K562 (cell line): ENCODE measurements at regions of chr1 and their contacts with region 1.

Region 1: DNA sequence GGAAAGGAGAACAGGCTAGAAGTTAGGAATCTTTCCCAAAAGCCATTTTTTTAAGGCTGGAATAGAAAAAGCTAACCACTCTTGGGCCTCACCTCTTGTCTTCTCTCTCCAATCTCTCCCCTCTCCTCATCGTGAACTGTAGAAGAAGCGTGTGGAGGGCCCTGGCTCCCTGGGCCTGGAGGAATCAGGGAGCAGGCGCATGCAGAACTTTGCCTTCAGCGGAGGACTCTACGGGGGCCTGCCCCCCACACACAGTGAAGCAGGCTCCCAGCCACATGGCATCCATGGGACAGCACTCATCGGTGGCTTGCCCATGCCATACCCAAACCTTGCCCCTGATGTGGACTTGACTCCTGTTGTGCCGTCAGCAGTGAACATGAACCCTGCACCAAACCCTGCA is 19.4 kb downstream of the PPP1R8 start:
- DNase-seq: no peak
- ATAC-seq: peak; percentile 33; the same call in 1 of the 3 replicates
- H3K4me3 ChIP-seq: no peak overlapping the region
- H3K27ac ChIP-seq: no peak overlapping the region
- H3K4me1 ChIP-seq: no peaks in the 10 kb centered on the region
- H3K27me3 ChIP-seq: no peaks in the 10 kb centered on the region
- CTCF ChIP-seq: no peak
- EP300 ChIP-seq: no peak
- POLR2A ChIP-seq: no peak
- RAD21 ChIP-seq: no peak

Region 2: GRCh38 chr1:27830621-27831424 is 19.1 kb before region 1 on chr1 and contains the start of gene PPP1R8:
- CTCF ChIA-PET with region 1: no interaction called
- POLR2A ChIA-PET with region 1: interaction called, 12 read pairs
- in situ Hi-C with region 1: no loop called
- intact Hi-C with region 1: no loop called
- DNase-seq: peak; percentile 90 to 99 (median 93)
- ATAC-seq: peak; percentile 99
- H3K4me3 ChIP-seq: peak within 1 kb of the TSS; percentile 61
- H3K27ac ChIP-seq: peak within 1 kb of the TSS; percentile 82
- H3K4me1 ChIP-seq: peaks cover 7 to 14% of the 10 kb centered on the region in 2 experiments; a peak in 3 of 5 replicates
- H3K27me3 ChIP-seq: no peaks in the 10 kb centered on the region
- CTCF ChIP-seq: no peak
- EP300 ChIP-seq: no peak
- POLR2A ChIP-seq: peak; percentile 99
- RAD21 ChIP-seq: no peak
- polyA plus RNA-seq, gene PPP1R8: 16.2 to 20.2 TPM

Region 3: DNA sequence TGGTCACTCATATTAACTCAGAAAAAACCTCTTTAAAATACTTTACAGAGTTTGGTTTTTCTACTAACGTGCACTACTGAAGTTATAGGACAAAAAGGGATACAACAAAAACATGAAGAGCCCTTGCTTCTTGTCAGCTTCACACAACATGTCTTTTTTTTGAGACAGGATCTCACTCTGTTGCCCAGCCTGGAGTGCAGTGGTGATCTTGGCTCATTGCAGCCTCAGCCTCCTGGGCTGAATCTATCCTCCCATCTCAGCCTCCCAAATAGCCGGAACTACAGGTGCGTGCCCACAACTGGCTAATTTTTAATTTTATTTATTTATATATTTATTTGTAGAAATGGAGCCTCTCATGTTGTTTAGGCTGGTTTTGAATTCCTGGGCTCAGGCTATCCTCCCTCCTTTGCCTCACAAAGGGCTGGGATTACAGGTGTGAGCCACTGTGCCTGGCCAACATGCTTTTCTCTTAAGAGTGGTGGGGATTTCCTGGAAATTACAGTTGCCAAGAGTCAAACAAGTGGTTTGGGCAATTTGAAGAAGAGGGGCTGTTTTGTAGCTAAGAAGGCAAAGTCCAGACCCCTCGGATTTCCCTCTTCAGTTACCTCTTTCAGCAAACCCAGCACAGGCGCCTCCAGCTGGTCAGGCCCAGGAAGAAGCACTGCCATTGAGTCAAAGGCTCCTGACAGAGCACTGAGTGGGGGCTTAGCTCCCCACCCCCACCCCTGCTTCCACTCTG is 78.4 kb after region 1 on chr1:
- CTCF ChIA-PET with region 1: no interaction called
- POLR2A ChIA-PET with region 1: no interaction called
- in situ Hi-C with region 1: no loop called
- intact Hi-C with region 1: no loop called
- DNase-seq: peak in 2 of 4 experiments; percentile 35 to 36
- ATAC-seq: peak; percentile 69
- H3K4me3 ChIP-seq: no peak overlapping the region
- H3K27ac ChIP-seq: no peak overlapping the region
- H3K4me1 ChIP-seq: peaks cover 0 to 6% of the 10 kb centered on the region in 2 experiments; a peak in 3 of 5 replicates
- H3K27me3 ChIP-seq: no peaks in the 10 kb centered on the region
- CTCF ChIP-seq: peak; percentile 34 to 40 (median 35); a peak in 4 of 6 replicates
- EP300 ChIP-seq: no peak
- POLR2A ChIP-seq: no peak
- RAD21 ChIP-seq: peak in 1 of 2 experiments; percentile 24; a peak in 1 of 4 replicates

Region 4: DNA sequence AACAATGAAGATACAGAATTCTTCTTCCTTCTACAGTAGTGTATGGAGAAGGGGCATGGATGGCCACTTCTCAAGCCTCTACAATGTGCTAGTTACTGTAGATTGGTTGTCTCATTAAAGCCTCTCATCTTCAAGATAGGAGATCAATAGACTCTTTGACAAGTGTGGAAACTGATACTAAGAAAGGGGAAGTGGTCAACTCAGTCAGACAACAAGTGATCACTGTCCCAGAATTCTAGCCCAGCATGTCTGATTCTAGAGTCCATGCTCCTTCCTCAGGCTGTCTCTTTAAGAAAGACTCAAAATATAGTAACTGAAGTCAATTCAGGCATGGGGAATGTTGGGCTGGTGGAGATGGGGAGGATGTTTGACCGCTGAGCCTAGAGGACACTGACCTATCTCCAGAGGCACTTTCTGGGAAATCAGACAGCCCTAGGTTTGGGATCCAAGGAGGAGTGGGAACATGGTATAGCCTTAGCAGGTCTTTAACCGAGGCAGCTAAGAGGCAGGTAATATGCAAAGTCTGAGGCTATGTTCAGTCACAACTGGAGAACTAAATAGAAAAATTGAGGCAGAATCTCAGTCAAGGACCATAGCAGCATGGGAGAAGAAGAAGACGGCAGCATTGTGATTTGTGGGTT is 277.8 kb after region 1 on chr1:
- CTCF ChIA-PET with region 1: no interaction called
- POLR2A ChIA-PET with region 1: no interaction called
- in situ Hi-C with region 1: no loop called
- intact Hi-C with region 1: no loop called
- DNase-seq: no peak
- ATAC-seq: peak; percentile 37
- H3K4me3 ChIP-seq: no peak overlapping the region
- H3K27ac ChIP-seq: 0 out of 3 replicates have a peak overlapping the region, but pooled peaks have one; percentile 0
- H3K4me1 ChIP-seq: peaks cover 6 to 23% of the 10 kb centered on the region in 2 experiments; a peak in 4 of 5 replicates
- H3K27me3 ChIP-seq: no peaks in the 10 kb centered on the region; a peak in 1 of 5 replicates
- CTCF ChIP-seq: no peak
- EP300 ChIP-seq: no peak
- POLR2A ChIP-seq: no peak
- RAD21 ChIP-seq: no peak